AG04450 (cell line): ENCODE measurements at regions of chr1 and their contacts with region 1.

Region 1: GRCh38 chr1:112395821-112396652 is at the start of gene CTTNBP2NL:
- DNase-seq: peak; percentile 85
- H3K4me3 ChIP-seq: peak within 1 kb of the TSS; percentile 97
- H3K27ac ChIP-seq: peak within 1 kb of the TSS; percentile 94
- H3K27me3 ChIP-seq: no peaks in the 10 kb centered on the region
- CTCF ChIP-seq: no peak
- polyA plus RNA-seq, gene CTTNBP2NL: 23.6 and 30.5 TPM in 2 replicates

Region 2: GRCh38 chr1:112369392-112370285 is 26.4 kb before region 1 on chr1:
- CTCF ChIA-PET with region 1: interaction called, 10 read pairs
- POLR2A ChIA-PET with region 1: no interaction called
- DNase-seq: peak; percentile 44
- H3K4me3 ChIP-seq: no peak overlapping the region
- H3K27ac ChIP-seq: no peak overlapping the region
- H3K27me3 ChIP-seq: peaks cover 24% of the 10 kb centered on the region
- CTCF ChIP-seq: peak; percentile 99

Region 3: DNA sequence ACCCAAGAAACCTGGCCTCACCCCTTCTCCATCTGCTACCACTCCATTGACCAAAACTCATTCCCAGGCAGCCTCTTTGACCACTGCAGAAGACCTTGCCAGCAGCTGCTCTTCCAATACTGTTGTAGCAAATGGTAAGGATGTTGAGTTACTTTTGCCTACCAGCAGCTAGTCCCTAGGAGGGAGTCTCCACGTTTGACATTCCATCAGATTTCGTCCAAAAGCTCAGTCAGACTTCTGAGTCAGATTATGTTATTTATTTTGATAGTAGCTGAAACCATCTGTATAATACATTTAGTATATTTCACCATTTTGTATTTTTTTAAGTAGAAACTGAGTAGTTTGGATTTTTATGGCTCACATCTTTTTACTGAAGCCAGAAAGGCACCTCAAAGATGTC is 61.2 kb after region 1 on chr1:
- CTCF ChIA-PET with region 1: interaction called, 14 read pairs
- POLR2A ChIA-PET with region 1: interaction called, 13 read pairs
- DNase-seq: peak; percentile 70
- H3K4me3 ChIP-seq: no peak overlapping the region
- H3K27ac ChIP-seq: peak overlapping the region; percentile 82
- H3K27me3 ChIP-seq: no peaks in the 10 kb centered on the region
- CTCF ChIP-seq: no peak

Region 4: GRCh38 chr1:112466078-112466660 is 70.1 kb after region 1 on chr1:
- CTCF ChIA-PET with region 1: interaction called, 125 read pairs
- POLR2A ChIA-PET with region 1: interaction called, 8 read pairs
- DNase-seq: peak; percentile 89
- H3K4me3 ChIP-seq: peak overlapping the region; percentile 55
- H3K27ac ChIP-seq: peak overlapping the region; percentile 69
- H3K27me3 ChIP-seq: no peaks in the 10 kb centered on the region
- CTCF ChIP-seq: peak; percentile 80

Region 5: GRCh38 chr1:112614460-112615065 is 218.5 kb after region 1 on chr1:
- CTCF ChIA-PET with region 1: interaction called, 130 read pairs
- POLR2A ChIA-PET with region 1: interaction called, 11 read pairs
- DNase-seq: peak; percentile 11
- H3K4me3 ChIP-seq: no peak overlapping the region
- H3K27ac ChIP-seq: no peak overlapping the region
- H3K27me3 ChIP-seq: no peaks in the 10 kb centered on the region
- CTCF ChIP-seq: peak; percentile 82

Region 6: DNA sequence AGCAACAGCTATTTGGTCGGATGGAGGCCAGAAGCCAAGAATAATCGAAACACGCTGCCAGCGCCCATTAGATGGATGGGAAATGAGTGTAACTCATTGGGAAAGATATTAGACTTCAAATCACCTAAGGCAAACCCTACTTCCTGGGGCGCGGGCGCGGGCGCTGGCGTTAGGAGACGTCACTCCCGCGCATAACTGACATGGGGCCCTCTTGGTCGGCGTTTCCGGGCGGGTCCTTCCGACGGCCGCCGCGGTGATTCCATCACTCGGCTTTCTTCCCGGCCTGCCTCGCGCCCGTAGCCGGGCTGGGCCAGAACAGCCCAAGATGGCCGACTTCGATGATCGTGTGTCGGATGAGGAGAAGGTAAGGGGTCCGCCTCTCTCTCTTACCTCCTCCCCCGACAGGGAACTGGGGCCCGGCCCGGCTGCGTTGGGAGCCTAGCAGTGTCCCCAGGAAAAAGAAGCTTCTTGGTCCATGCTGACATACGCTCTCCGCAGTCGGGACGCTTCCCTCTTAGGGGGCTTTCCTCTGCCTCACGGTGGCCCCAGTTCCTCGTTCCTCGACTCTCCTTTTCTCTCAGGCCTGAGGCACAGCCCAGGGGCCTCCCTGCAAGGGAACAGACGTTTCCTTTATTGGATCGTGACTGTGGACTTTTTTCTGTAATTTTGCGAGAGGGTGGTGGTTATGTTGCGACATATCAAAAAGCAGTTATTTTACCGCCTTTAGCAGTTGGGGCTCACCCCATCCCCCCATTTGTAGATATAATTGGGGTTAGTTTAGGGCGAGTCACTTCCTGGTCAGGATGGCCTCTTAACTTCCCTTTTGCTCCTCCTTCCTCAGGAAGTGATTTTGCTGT is 223.7 kb after region 1 on chr1 and contains the start of gene CAPZA1:
- CTCF ChIA-PET with region 1: interaction called, 130 read pairs
- POLR2A ChIA-PET with region 1: interaction called, 11 read pairs
- DNase-seq: peak; percentile 78
- H3K4me3 ChIP-seq: peak within 1 kb of the TSS; percentile 98
- H3K27ac ChIP-seq: peak within 1 kb of the TSS; percentile 96
- H3K27me3 ChIP-seq: no peaks in the 10 kb centered on the region
- CTCF ChIP-seq: no peak
- polyA plus RNA-seq, gene CAPZA1: 195 and 273 TPM in 2 replicates

Region 7: DNA sequence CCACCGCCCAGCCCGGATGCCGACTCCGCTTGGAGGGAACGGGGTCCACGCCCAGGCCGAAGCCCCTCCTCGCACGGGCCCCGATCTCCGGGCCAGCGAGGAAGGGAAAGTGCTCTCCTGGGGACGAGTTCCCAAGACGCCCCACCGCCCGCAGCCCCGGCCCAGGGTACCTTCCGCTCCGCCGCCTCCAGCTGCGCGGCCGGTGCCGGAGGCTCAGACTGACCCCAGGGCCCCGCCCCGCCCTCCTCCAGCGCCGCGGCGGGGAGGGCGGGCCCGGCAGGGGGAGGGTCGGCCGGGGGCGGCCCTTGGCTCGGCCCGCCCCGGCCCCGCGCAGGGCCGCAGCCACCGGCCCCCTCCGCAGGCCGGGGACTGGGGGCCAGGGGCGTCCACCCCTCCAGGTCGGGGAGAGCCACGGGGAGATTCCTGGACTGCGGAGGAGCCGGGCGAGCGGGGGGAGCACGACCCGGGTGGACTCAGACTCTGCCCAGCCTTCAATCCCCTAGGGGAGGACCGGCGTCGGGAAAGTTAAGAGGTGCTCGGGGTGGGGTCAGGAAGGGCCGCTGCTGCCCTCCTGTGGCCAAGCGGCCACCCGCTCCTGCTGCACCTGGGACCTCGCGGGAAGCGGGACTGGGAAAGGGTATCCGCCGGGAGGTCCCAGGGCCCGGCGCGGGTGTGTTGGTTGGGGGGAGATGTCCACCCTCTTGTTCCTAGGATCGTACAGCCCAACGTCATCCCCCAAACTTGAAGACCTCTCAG is 311.0 kb after region 1 on chr1 and contains the start of gene RHOC:
- CTCF ChIA-PET with region 1: interaction called, 15 read pairs
- POLR2A ChIA-PET with region 1: interaction called, 11 read pairs
- DNase-seq: no peak
- H3K4me3 ChIP-seq: peak within 1 kb of the TSS; percentile 88
- H3K27ac ChIP-seq: peak within 1 kb of the TSS; percentile 74
- H3K27me3 ChIP-seq: no peaks in the 10 kb centered on the region
- CTCF ChIP-seq: peak; percentile 94
- polyA plus RNA-seq, gene RHOC: 574 and 734 TPM in 2 replicates

Region 8: GRCh38 chr1:112840631-112841624 is 444.9 kb after region 1 on chr1:
- CTCF ChIA-PET with region 1: no interaction called
- POLR2A ChIA-PET with region 1: no interaction called
- DNase-seq: no peak
- H3K4me3 ChIP-seq: no peak overlapping the region
- H3K27ac ChIP-seq: no peak overlapping the region
- H3K27me3 ChIP-seq: no peaks in the 10 kb centered on the region
- CTCF ChIP-seq: no peak